CD4-positive, alpha-beta memory T cell (primary cell): ENCODE measurements at regions of chr22 and their contacts with region 1.

Region 1: GRCh38 chr22:39117585-39118191 is 20.6 kb downstream of the APOBEC3H start:
- DNase-seq: peak; percentile 69 to 88 (median 73)
- H3K4me3 ChIP-seq: no peak overlapping the region
- H3K4me3 Mint-ChIP-seq: peak overlapping the region; percentile 53 to 82 (median 74)
- H3K27ac ChIP-seq: peak overlapping the region; percentile 52
- H3K27ac Mint-ChIP-seq: peak overlapping the region; percentile 77 to 92 (median 88)
- H3K4me1 ChIP-seq: peaks cover 35% of the 10 kb centered on the region
- H3K4me1 Mint-ChIP-seq: peaks cover 29 to 49% (median 34%) of the 10 kb centered on the region in 4 donors
- H3K27me3 ChIP-seq: no peaks in the 10 kb centered on the region
- H3K27me3 Mint-ChIP-seq: no peaks in the 10 kb centered on the region

Region 2: DNA sequence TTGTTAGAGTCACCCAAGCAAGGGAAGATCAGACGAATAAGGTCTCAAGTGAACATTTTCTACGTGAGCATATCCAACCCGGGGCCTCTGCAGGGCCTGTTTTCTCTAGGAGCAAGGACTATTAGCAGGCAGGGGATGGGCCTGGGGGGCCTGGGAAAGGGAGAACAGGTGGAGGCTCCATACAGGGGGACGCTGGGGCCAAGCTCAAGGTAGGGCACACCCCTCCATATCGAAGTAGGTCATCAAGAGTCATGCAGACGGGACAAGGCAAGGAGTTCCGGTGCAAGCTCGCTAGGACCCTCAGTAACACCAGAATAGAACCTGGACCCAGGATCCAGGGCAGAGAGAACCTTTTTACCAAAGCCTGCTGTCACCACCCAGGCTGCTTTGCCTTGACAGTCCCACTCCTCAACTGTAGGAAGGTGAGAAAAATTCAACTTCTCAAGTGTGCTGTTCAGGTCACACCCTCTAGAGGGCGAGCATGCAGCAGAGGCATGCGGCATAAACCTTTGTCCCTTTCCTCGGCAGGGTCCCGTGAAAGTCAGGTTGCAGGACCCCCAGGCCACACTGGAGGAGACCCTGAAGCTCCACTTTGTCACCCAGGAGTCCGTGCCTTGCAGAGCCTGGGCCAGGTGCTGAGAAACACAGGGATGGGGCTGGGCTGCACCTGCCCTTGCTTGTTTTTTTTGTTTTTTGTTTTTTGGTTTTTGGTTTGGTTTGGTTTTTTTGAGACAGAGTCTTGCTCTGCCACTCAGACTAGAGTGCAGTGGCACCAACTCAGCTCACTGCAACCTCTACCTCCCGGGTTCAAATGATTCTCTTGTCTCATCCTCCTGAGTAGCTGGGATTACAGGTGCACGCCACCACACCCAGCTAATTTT is 144.2 kb before region 1 on chr22:
- CTCF ChIA-PET with region 1: interaction called, 4 read pairs
- POLR2A ChIA-PET with region 1: interaction called, 3 read pairs
- intact Hi-C with region 1: loop called (anchors 1 kb)
- DNase-seq: peak; percentile 27 to 62 (median 53)
- H3K4me3 ChIP-seq: no peak overlapping the region
- H3K4me3 Mint-ChIP-seq: no peak overlapping the region
- H3K27ac ChIP-seq: no peak overlapping the region
- H3K27ac Mint-ChIP-seq: peak overlapping the region in 3 of 7 donors; percentile 32 to 69 (median 52)
- H3K4me1 ChIP-seq: no peaks in the 10 kb centered on the region
- H3K4me1 Mint-ChIP-seq: peaks cover 0 to 8% (median 3%) of the 10 kb centered on the region in 4 donors
- H3K27me3 ChIP-seq: no peaks in the 10 kb centered on the region
- H3K27me3 Mint-ChIP-seq: peaks cover 5 to 6% of the 10 kb centered on the region in 2 donors

Region 3: GRCh38 chr22:39078329-39078728 is 39.4 kb before region 1 on chr22:
- CTCF ChIA-PET with region 1: interaction called, 3 read pairs
- POLR2A ChIA-PET with region 1: interaction called, 3 read pairs
- intact Hi-C with region 1: loop called (anchors 5 kb)
- DNase-seq: no peak
- H3K4me3 ChIP-seq: peak overlapping the region in 1 of 2 donors; percentile 86
- H3K4me3 Mint-ChIP-seq: peak overlapping the region; percentile 89 to 93 (median 90)
- H3K27ac ChIP-seq: peak overlapping the region; percentile 96
- H3K27ac Mint-ChIP-seq: peak overlapping the region; percentile 93 to 97 (median 95)
- H3K4me1 ChIP-seq: peaks cover 51% of the 10 kb centered on the region
- H3K4me1 Mint-ChIP-seq: peaks cover 22 to 69% (median 50%) of the 10 kb centered on the region in 4 donors
- H3K27me3 ChIP-seq: no peaks in the 10 kb centered on the region
- H3K27me3 Mint-ChIP-seq: no peaks in the 10 kb centered on the region

Region 4: GRCh38 chr22:39170825-39171622 is 53.3 kb after region 1 on chr22:
- CTCF ChIA-PET with region 1: no interaction called
- POLR2A ChIA-PET with region 1: no interaction called
- intact Hi-C with region 1: no loop called
- DNase-seq: peak; percentile 81 to 89 (median 83)
- H3K4me3 ChIP-seq: peak overlapping the region; percentile 49 to 63
- H3K4me3 Mint-ChIP-seq: peak overlapping the region; percentile 51 to 79 (median 68)
- H3K27ac ChIP-seq: peak overlapping the region; percentile 40
- H3K27ac Mint-ChIP-seq: peak overlapping the region; percentile 89 to 95 (median 92)
- H3K4me1 ChIP-seq: peaks cover 52% of the 10 kb centered on the region
- H3K4me1 Mint-ChIP-seq: peaks cover 28 to 49% (median 40%) of the 10 kb centered on the region in 4 donors
- H3K27me3 ChIP-seq: no peaks in the 10 kb centered on the region
- H3K27me3 Mint-ChIP-seq: peaks cover 0 to 2% of the 10 kb centered on the region in 2 donors